ENCODE measurements at regions of chr16 and their contacts with region 1.

Region 1: DNA sequence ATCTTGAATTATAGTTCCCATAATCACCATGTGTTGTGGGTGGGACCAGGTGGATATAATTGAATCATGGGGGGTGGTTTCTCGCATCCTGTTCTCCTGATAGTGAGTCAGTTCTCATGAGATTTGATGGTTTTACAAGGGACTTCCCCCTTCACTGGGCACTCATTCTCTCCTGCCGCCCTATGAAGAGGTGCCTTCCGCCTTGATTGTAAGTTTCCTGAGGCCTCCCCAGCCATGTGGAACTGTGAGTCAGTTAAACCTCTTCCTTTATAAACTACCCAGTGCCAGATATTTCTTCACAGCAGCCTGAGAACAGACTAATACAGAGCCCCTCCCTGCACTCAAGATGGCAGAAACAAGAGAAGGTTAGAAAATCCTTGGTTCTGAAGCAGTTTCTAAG is 26.4 kb downstream of the LDAF1 start:
- DNase-seq: no peak
- ATAC-seq: no peak
- H3K4me3 ChIP-seq: no peak overlapping the region
- H3K27ac ChIP-seq: no peak overlapping the region
- H3K4me1 ChIP-seq: peaks cover 45% of the 10 kb centered on the region
- H3K27me3 ChIP-seq: no peaks in the 10 kb centered on the region
- CTCF ChIP-seq: no peak
- EP300 ChIP-seq: no peak
- POLR2A ChIP-seq: no peak
- RAD21 ChIP-seq: no peak

Region 2: GRCh38 chr16:21158208-21159110 is 26.4 kb before region 1 on chr16 and contains the start of gene LDAF1:
- CTCF ChIA-PET with region 1: interaction called, 3 read pairs
- POLR2A ChIA-PET with region 1: interaction called, 5 read pairs
- in situ Hi-C with region 1: no loop called
- intact Hi-C with region 1: loop called (anchors 1 kb)
- DNase-seq: peak; percentile 33
- ATAC-seq: peak; percentile 93
- H3K4me3 ChIP-seq: peak within 1 kb of the TSS; percentile 79 to 88 (median 80)
- H3K27ac ChIP-seq: no peak within 1 kb of the TSS
- H3K4me1 ChIP-seq: peaks cover 33% of the 10 kb centered on the region
- H3K27me3 ChIP-seq: peaks cover 2 to 18% of the 10 kb centered on the region in 2 experiments; a peak in 2 of 5 replicates
- CTCF ChIP-seq: peak; percentile 40; the same call in 1 of the 2 replicates
- EP300 ChIP-seq: peak in 1 of 2 experiments; percentile 32; a peak in 2 of 4 replicates
- POLR2A ChIP-seq: no peak
- RAD21 ChIP-seq: peak; percentile 48; the same call in 1 of the 2 replicates
- total RNA-seq, gene LDAF1: 6.3 and 8.3 TPM in 2 replicates

Region 3: DNA sequence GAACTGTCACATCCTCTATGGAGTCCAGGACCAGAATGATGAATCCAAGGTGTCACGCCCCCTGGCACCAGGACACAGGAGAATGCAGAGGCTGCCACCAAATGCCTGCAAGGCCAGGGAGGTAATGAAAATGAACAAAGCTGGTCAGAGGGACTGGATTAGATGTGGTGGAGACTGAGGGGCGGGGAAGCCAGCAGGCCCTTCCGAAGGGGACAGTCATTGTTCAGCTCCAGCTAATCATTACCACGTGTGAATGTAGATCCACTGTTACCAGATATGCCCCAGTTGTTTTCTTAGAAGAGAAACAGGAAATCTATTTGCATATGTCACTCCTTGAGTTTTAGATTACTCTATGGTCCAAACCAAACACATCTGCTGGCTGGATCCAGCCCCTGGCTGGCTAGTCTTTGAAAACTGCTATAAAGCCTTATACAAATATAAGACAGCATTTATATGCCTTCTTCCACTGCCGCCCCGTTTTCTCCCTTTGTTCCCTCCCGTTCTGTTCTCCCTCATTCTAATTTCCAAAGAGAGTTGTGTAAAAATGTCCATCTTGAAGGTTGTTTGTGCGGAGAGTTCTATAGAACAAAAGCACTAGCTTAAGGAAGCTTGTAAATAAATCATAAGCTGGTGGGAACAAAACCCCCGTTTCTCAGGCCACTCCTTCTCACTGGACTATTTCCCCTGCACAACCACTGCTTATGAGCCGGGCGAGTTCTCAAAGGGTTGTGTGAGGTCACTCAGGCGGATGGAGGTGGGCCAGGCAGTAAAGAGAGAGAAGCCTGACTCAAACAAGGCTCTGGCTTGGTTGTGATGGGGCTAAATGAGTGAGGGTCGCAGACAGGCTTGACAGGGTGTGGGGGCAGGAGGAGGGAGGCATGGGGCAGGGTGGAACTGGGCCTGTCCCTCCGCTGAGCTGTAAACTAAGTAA is 79.1 kb after region 1 on chr16:
- CTCF ChIA-PET with region 1: no interaction called
- POLR2A ChIA-PET with region 1: interaction called, 20 read pairs
- in situ Hi-C with region 1: no loop called
- intact Hi-C with region 1: loop called (anchors 1 kb)
- DNase-seq: peak; percentile 81
- ATAC-seq: peak; percentile 76
- H3K4me3 ChIP-seq: peak overlapping the region; percentile 23 to 50 (median 45)
- H3K27ac ChIP-seq: peak overlapping the region; percentile 46
- H3K4me1 ChIP-seq: peaks cover 68% of the 10 kb centered on the region
- H3K27me3 ChIP-seq: no peaks in the 10 kb centered on the region
- CTCF ChIP-seq: peak; percentile 38
- EP300 ChIP-seq: no peak
- POLR2A ChIP-seq: peak; percentile 40 to 60; a peak in 3 of 4 replicates
- RAD21 ChIP-seq: no peak

Region 4: GRCh38 chr16:21283521-21284289 is 98.9 kb after region 1 on chr16:
- CTCF ChIA-PET with region 1: interaction called, 58 read pairs
- POLR2A ChIA-PET with region 1: no interaction called
- in situ Hi-C with region 1: loop called (anchors 5 kb)
- intact Hi-C with region 1: loop called (anchors 1 kb)
- DNase-seq: peak; percentile 51
- ATAC-seq: peak; percentile 99
- H3K4me3 ChIP-seq: peak overlapping the region; percentile 64 to 77 (median 74)
- H3K27ac ChIP-seq: no peak overlapping the region
- H3K4me1 ChIP-seq: peaks cover 13% of the 10 kb centered on the region
- H3K27me3 ChIP-seq: peaks cover 0 to 18% of the 10 kb centered on the region in 2 experiments; a peak in 4 of 5 replicates
- CTCF ChIP-seq: peak; percentile 85
- EP300 ChIP-seq: no peak
- POLR2A ChIP-seq: no peak
- RAD21 ChIP-seq: peak; percentile 73

Measured in HepG2 (cell line).